ENCODE measurements at regions of chr5 and their contacts with region 1.

Region 1: DNA sequence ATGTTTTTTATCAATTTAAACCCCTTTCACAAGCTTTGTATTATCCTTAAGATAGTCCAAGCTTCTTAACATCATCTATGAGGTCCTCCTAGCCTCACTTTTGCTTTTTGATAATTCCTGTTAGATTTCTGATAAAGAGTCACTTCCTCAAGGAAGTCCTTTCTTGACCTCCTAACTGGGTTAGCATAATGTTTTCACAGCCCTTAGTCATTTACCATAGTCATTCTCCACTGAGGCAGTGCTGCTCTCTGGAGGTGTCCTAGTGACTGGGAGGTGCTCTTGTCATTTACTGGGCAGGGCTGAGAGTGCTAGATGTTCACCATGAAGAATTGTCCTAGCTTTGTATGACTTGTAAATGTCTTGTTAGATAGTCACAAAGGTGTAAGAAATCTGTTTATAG is 26.4 kb downstream of the TNPO1 start:
- DNase-seq: peak; percentile 55 to 78
- H3K4me3 ChIP-seq: no peak overlapping the region
- H3K27ac ChIP-seq: peak overlapping the region; percentile 91
- H3K4me1 ChIP-seq: peaks cover 62% of the 10 kb centered on the region
- H3K27me3 ChIP-seq: no peaks in the 10 kb centered on the region
- CTCF ChIP-seq: peak; percentile 34; the same call in 1 of the 2 replicates

Region 2: DNA sequence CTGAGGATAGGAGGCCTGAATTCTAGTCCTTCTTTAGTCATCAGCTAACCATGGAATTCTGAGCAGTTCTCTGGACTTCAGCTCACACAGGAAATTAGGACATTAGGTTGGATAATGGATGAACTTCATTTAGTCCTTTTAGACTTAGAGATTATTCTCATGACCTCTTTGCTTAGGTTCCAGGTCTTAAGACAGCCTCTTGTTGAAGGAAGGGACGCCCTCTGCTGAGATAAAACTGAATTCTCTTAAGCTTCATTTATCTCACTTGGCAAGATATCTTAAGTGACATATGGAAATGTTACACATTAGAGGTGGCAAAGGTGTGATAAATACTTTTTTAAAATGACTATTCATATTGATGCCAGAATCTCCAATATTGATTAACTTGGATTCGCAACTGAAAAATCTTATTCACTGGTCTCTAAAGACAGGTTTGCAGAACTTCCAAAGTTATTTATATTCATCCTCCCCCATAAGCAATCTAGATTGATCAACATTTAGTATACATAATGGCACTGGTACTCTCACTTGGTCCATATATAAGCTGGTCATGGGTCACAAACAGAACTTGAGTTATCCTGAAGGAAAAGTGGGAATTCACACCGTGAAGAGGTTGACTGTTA is 318.7 kb before region 1 on chr5:
- CTCF ChIA-PET with region 1: interaction called, 3 read pairs
- POLR2A ChIA-PET with region 1: no interaction called
- intact Hi-C with region 1: loop called (anchors 5 kb)
- DNase-seq: peak in 1 of 2 experiments; percentile 67
- H3K4me3 ChIP-seq: no peak overlapping the region
- H3K27ac ChIP-seq: no peak overlapping the region
- H3K4me1 ChIP-seq: peaks cover 13% of the 10 kb centered on the region
- H3K27me3 ChIP-seq: no peaks in the 10 kb centered on the region
- CTCF ChIP-seq: peak; percentile 76

Region 3: GRCh38 chr5:72859127-72859526 is 16.3 kb after region 1 on chr5:
- CTCF ChIA-PET with region 1: no interaction called
- POLR2A ChIA-PET with region 1: interaction called, 12 read pairs
- intact Hi-C with region 1: no loop called
- DNase-seq: no peak
- H3K4me3 ChIP-seq: no peak overlapping the region
- H3K27ac ChIP-seq: no peak overlapping the region
- H3K4me1 ChIP-seq: peaks cover 6% of the 10 kb centered on the region; the same call in 1 of the 2 replicates
- H3K27me3 ChIP-seq: no peaks in the 10 kb centered on the region
- CTCF ChIP-seq: no peak

Measured in PC-9 (cell line).